Colonic mucosa (tissue), 4 donors: ENCODE measurements at regions of chr17 and their contacts with region 1.

Region 1: DNA sequence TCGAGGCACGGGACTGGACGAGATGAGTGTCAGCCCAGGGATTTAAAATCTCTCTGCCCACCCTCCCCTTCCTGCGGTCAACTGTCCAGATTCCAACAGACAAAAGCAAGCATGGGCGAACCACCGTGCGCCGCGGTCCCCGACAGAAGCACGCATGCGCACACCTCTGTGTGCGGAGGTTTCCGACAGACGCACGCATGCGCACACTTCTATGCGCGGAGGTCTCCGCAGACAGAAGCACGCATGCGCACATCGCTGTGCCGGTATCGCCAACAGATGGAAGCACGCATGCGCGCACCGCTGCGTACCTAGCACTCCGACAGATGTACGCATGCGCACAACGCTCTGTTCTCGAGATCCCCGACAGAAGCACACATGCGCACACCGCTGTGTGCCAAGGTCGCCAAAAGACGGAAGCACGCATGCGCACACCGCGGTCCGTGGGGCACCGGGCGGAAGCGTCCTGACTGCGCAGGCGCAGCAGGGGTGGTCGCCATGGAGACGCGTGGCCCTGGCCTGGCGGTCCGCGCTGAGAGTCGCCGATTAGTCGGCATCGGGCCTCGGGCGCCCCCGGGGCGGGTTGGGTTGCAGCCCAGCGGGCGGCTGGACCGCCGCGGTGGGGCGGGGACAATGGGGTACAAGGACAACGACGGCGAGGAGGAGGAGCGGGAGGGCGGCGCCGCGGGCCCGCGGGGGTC is 57.4 kb upstream of the RPH3AL start:
- DNase-seq: peak; percentile 98
- H3K4me3 ChIP-seq: peak overlapping the region; percentile 96
- H3K27ac ChIP-seq: peak overlapping the region; percentile 74
- H3K4me1 ChIP-seq: peaks cover 15% of the 10 kb centered on the region
- H3K27me3 ChIP-seq: no peaks in the 10 kb centered on the region
- CTCF ChIP-seq: no peak

Region 2: DNA sequence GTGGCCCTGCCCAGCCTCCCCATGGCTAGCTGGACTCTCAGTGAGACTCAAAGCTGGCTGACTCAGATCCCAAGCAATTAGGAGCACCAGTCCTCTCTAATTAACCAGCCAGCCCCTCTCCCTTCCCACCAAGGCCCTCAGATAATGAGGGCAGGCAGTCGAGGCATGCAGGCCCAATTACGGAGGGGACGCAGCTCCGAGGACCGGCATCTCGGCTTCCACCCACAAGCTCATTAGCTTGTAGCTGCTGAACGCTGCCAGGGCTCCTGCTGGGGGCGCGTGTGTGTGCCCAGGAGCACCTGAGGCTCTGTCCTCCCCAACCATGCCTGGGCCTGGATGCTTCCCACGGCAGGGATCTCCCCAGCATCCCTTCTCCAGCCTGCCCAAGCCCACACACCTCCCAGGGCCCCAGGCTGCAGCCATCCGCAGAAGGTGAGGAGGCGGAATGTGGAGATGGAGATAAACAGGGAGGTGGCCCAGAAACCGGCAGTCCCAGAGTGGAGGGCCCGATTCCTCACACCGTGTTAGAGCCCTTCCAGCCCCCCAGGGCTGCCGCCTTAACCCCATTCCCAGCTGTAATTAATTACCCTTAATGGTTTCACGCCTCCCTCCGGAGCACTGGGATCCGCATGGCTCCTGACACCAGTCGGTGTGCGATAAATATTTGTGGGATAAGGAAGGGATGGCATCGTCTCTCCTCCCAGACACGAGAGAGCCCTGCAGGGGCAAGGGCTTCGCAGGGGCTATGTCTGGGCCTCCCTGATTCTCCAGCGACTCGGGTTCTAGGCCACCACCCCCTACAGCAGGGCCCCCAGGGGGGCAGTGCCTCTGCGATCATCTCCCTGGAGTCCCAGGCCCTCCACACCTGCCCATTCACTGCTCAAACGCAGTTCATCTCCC is 99.6 kb before region 1 on chr17:
- intact Hi-C with region 1: no loop called
- DNase-seq: no peak
- H3K4me3 ChIP-seq: no peak overlapping the region
- H3K27ac ChIP-seq: no peak overlapping the region
- H3K4me1 ChIP-seq: no peaks in the 10 kb centered on the region
- H3K27me3 ChIP-seq: no peaks in the 10 kb centered on the region
- CTCF ChIP-seq: no peak

Region 3: DNA sequence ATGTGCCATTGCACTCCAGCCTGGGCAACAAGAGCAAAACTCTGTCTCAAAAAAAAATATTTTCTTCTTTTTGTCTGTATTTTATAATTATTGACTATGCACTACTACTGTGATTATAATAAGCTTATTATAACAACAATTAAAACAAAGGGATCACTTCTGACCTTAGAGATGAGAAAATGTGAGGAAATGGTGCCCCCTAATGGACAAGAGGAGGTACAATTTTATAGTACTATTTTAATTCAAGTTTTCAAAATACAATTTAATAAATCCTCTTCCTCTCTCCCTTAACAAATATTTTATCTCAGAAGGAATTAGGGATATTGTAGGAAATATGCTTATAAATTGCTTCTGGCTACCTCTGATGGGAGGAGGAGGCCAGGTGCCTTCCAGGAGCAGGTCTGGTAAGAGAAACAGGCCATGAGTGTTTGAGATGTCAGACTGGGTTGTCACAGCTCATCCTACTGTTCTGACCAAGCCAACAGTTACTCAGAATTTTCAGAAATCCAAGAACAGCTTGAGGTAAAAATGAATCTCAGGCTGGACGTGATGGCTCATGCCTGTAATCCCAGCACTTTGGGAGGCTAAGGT is 290.6 kb after region 1 on chr17:
- intact Hi-C with region 1: loop called (anchors 5 kb)
- DNase-seq: no peak
- H3K4me3 ChIP-seq: no peak overlapping the region
- H3K27ac ChIP-seq: no peak overlapping the region
- H3K4me1 ChIP-seq: peaks cover 3% of the 10 kb centered on the region
- H3K27me3 ChIP-seq: no peaks in the 10 kb centered on the region
- CTCF ChIP-seq: peak; percentile 61